PC-9 (cell line): ENCODE measurements at regions of chr7 and their contacts with region 1.

Region 1: GRCh38 chr7:143214789-143215679 is 6.8 kb upstream of the TAS2R40 start:
- DNase-seq: peak; percentile 61 to 76
- H3K4me3 ChIP-seq: no peak overlapping the region
- H3K27ac ChIP-seq: no peak overlapping the region
- H3K4me1 ChIP-seq: no peaks in the 10 kb centered on the region
- H3K27me3 ChIP-seq: no peaks in the 10 kb centered on the region
- CTCF ChIP-seq: peak; percentile 100

Region 2: DNA sequence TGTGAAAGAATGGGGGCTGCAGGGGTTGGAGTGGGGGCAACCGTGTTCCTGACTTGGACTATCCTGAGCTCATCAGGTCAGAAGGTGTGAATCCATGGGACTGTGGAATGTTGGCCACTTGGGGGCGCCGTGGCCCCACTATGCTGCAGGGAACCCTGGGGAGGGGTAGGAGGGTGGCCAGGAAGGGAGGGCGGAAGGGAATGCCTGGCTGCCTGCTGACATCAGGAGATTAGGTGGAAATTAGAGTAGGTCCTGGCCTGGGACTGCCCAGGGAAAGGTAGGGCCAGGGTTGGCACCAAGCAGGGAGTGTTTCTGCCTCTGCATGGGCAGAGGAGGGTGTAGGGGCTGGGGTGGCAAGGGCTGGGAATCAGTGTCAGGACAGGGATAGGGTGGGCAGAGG is 891.3 kb before region 1 on chr7:
- CTCF ChIA-PET with region 1: interaction called, 11 read pairs
- POLR2A ChIA-PET with region 1: no interaction called
- intact Hi-C with region 1: loop called (anchors 1 kb)
- DNase-seq: peak; percentile 66 to 85
- H3K4me3 ChIP-seq: no peak overlapping the region
- H3K27ac ChIP-seq: no peak overlapping the region
- H3K4me1 ChIP-seq: peaks cover 13% of the 10 kb centered on the region
- H3K27me3 ChIP-seq: no peaks in the 10 kb centered on the region
- CTCF ChIP-seq: peak; percentile 88

Region 3: DNA sequence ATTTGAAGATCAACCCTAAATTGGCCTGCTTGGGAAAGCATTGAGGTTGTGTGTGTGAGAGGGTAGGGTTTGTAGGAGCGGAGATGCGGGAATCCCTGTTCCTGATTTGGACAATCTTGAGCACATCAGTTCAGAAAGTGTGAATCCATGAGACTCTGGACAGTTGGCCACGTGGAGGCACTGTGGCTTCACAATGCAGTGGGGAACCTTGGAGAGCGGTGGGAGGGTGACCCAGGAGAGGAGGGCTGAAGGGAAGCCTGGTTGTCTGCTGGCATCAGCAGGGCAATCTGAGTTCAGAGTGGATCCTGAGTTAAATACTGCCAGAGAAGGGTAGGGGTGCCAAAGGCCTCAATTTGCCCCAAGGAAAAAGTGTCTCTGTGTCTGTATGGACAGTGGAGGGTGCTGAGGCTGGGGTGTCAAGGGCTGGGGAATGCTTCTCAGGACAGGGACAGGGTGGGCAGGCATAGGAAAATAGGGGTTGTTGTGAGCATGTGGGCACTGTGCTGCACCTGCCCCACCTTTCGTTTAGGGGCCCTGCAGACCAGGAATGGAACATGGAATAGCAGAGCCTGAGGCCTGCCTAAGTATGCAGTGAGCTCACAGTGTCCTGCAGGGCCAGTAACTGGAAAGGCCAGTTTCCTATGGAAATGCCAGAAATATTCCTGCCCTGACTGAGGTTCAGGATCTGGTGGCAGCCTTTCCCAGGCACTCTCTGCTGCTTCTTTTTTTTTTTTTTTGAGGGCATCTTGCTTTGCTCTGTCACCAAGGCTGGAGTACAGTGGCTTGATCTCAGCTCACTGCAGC is 794.3 kb before region 1 on chr7:
- CTCF ChIA-PET with region 1: no interaction called
- POLR2A ChIA-PET with region 1: no interaction called
- intact Hi-C with region 1: loop called (anchors 1 kb)
- DNase-seq: peak; percentile 74 to 79
- H3K4me3 ChIP-seq: no peak overlapping the region
- H3K27ac ChIP-seq: 0 out of 2 replicates have a peak overlapping the region, but pooled peaks have one; percentile 22
- H3K4me1 ChIP-seq: peaks cover 9% of the 10 kb centered on the region
- H3K27me3 ChIP-seq: no peaks in the 10 kb centered on the region
- CTCF ChIP-seq: peak; percentile 59; the same call in 1 of the 2 replicates

Region 4: DNA sequence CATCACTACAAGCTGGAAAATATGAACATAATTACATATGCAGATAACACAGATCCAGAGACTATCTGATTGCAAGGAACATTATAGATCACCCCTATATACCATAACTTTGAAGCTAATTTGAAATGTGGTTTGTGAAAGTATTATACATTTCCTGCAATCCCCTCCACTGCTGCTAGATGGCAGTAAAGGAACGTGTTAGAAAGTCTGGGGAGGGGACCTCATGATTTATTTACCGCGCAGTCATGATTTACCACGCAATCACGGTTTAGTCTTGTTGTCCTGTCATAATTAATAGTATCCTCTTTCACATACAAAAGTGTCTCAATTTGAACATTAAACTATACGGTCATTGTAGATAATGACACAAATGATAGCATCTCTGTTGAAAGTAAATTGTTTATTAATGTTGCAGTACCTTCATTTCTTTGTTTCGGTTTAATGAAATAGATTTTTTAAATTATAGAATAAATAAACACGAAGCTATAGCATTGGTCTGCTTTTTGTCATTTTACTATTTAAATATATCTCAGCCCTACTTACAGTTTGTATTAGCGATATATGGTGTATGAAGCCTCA is 611.1 kb before region 1 on chr7:
- CTCF ChIA-PET with region 1: interaction called, 5 read pairs
- POLR2A ChIA-PET with region 1: no interaction called
- intact Hi-C with region 1: loop called (anchors 2 kb)
- DNase-seq: peak; percentile 51 to 65
- H3K4me3 ChIP-seq: peak overlapping the region; percentile 25; the same call in 1 of the 2 replicates
- H3K27ac ChIP-seq: no peak overlapping the region
- H3K4me1 ChIP-seq: peaks cover 18% of the 10 kb centered on the region
- H3K27me3 ChIP-seq: no peaks in the 10 kb centered on the region
- CTCF ChIP-seq: peak; percentile 97

Region 5: DNA sequence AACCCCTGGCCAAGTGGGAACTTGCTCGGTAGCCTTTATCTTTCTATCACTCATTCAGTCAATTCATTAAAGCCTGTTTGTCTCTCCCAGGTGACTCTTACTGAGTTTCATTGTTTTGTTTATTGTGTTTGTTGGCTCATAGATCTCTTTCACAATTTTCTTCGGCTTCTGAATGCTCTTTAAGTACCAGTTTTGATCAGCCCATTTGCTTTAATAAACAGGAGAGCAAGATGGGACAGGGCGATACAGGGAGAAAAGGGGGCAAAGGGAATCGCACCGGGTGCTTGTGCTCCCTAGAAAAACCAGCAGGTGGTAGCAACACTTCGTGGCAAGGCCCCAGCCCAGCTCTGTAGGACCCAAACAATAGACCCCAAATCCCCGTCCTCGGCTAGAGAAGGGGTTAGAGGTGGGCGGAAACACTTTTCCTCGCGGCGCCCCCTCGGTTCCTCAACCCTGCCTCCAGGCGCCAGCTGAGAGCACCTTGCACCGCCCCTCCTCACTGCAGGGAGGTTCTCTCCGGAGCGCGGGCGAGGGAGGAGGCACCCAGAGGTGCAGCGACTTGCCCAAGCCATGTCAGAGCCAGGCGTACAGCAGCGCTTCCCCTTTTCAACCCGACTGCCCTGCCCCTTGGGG is 361.2 kb before region 1 on chr7:
- CTCF ChIA-PET with region 1: no interaction called
- POLR2A ChIA-PET with region 1: no interaction called
- intact Hi-C with region 1: loop called (anchors 1 kb)
- DNase-seq: peak; percentile 78 to 85
- H3K4me3 ChIP-seq: peak overlapping the region; percentile 95
- H3K27ac ChIP-seq: peak overlapping the region; percentile 83
- H3K4me1 ChIP-seq: peaks cover 40% of the 10 kb centered on the region
- H3K27me3 ChIP-seq: no peaks in the 10 kb centered on the region
- CTCF ChIP-seq: peak; percentile 92

Region 6: DNA sequence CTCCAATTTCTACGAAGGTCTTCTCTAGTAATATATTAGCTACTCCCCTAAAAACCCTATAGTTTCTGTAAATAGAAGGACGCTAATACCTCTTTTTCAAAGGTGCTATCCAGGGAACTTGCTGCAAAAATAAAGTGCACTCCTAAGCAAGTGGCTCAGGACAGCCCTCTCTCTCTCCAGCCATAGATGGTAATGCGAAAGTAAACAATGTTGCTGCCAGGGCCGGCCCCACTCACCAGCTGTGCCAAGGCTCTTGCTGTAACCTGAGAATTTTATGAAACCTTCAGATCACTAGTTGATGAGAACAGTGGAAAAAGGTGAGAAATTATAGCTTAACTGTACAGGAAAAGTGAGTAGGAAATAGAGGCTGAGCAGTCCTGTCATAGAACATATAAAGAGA is 42.7 kb before region 1 on chr7:
- CTCF ChIA-PET with region 1: no interaction called
- POLR2A ChIA-PET with region 1: no interaction called
- intact Hi-C with region 1: loop called (anchors 5 kb)
- DNase-seq: peak; percentile 63 to 65
- H3K4me3 ChIP-seq: peak overlapping the region; percentile 9; the same call in 1 of the 2 replicates
- H3K27ac ChIP-seq: peak overlapping the region; percentile 42
- H3K4me1 ChIP-seq: peaks cover 16% of the 10 kb centered on the region
- H3K27me3 ChIP-seq: no peaks in the 10 kb centered on the region
- CTCF ChIP-seq: no peak